BJ (cell line): ENCODE measurements at regions of chr20 and their contacts with region 1.

Region 1: DNA sequence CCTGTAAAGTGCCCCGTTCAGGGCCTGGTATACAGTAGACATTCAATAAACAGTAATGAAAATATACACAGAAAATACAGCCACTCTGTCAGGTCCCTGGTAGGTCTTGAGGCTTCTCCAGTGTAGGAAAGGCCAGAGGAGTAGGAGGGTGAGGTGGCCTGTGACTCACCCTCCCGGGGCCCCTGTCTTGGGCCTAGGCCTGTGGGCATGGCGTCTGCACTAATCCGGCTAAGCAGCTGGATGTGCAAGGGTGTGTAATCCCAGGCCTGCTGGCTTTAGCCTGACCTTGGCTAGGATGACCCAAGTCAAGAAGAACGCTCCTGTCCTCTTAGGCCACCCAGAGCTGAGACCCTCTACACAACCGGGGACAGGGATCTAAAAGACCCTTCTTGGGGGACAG is 84.9 kb downstream of the KCNB1 start:
- DNase-seq: peak; percentile 4
- H3K4me3 ChIP-seq: no peak overlapping the region
- H3K27me3 ChIP-seq: peaks cover 6% of the 10 kb centered on the region
- CTCF ChIP-seq: no peak

Region 2: DNA sequence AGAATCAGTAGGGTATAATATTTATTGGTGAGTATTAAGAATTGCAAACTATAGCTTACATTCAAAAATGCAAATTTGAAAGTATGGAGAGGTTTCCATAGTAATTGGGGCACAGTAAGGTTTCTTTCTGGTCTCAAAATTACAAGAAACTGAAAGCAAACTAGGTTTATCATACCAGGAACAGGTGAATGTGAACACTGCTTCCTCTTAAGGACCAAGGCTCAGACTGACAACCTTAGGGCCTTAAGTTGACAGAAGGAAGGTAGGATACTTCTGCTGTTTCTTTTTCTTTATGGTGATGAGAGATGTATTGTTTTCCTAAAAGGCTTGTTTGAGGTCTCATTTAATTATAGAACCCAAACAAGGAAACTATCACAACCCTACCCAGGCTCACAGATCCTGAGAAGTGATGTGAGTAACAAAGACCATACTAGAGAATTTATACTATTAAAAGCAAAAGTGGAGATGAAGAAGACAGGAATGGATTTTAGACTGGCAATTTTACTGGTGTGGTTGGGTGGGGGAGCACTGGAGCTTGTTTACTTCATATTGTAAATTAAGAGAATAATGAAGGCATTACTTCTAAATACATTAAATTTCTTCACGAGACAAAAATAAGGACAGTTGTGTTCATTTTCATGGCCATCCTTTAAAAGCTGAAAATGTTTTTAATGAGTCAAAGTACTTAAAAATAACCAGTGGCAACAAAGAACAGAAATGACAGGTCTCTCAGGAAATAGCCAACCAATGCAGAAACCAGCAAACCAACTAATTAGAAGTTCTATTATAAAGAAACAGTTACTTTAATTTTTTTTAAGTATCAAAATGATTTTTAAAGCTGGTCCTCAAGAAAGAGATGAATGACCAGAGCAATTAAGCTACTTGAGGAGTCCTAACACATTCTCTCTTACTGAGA is 230.7 kb before region 1 on chr20:
- CTCF ChIA-PET with region 1: no interaction called
- POLR2A ChIA-PET with region 1: no interaction called
- DNase-seq: no peak
- H3K4me3 ChIP-seq: no peak overlapping the region
- H3K27me3 ChIP-seq: no peaks in the 10 kb centered on the region
- CTCF ChIP-seq: no peak

Region 3: DNA sequence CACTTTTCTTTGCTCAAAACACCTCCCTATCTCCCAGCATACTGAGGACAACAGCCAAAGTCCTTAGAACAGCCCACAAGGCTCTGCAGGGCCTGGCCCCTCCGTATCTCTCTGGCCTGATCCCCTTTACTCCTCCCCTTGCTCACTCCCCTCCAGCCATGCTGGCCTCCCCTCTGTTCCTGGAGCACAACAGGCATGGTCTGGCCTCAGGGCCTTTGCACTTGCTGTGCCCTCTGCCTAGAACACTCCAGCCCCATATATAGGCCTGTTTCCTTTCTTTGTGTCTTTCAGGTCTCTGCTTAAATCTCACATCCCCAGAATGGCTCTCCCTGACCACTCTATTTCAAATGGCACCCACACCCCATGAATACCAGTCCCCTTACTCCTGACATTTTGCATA is 22.3 kb after region 1 on chr20:
- CTCF ChIA-PET with region 1: no interaction called
- POLR2A ChIA-PET with region 1: interaction called, 11 read pairs
- DNase-seq: no peak
- H3K4me3 ChIP-seq: no peak overlapping the region
- H3K27me3 ChIP-seq: peaks cover 18% of the 10 kb centered on the region
- CTCF ChIP-seq: no peak

Region 4: DNA sequence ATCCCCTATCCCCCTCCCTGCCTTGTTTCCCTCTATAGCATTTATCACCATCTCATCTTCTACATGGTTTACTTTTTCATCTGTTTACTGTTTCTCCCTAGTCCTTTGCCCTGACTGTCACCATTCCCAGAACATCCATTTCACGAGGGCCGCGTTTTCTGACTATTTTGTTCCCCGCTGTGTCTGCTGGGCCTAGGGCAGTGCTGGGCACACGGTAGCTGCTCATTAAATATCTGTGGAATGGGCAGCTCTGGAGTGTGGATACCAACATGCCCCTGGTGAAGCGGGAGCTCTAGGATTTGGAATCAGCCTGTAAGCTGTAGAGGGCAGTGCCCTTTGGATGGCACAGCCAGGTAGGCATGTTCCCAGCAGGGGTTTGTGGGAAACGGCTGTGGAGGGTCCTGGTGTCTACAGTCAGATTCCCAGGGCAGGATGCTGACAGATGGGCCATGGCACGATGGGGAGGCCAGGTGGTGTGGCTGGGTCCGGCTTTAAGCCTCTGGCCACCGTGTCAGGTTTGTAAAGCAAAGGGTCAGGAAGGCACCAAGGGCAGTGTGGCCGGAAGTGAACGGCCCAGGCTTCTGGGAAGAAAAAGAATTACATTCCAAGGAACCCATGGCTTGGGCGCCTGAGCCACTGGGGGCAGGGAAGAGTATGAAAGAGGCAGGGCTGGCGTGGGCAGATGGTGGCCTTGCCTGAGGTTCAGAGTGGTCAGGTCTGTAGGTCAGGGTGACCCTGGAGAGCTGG is 670.5 kb after region 1 on chr20:
- CTCF ChIA-PET with region 1: no interaction called
- POLR2A ChIA-PET with region 1: no interaction called
- DNase-seq: no peak
- H3K4me3 ChIP-seq: no peak overlapping the region
- H3K27me3 ChIP-seq: no peaks in the 10 kb centered on the region
- CTCF ChIP-seq: no peak